Spleen (tissue), 13 donors: ENCODE measurements at regions of chr7 and their contacts with region 1.

Region 1: GRCh38 chr7:140175221-140176121 is 1.3 kb downstream of the KDM7A start:
- DNase-seq: peak; percentile 97
- H3K4me3 ChIP-seq: peak overlapping the region; percentile 48 to 91 (median 70)
- H3K27ac ChIP-seq: peak overlapping the region; percentile 85 to 100 (median 98)
- H3K4me1 ChIP-seq: peaks cover 10 to 62% (median 32%) of the 10 kb centered on the region in 6 donors
- H3K27me3 ChIP-seq: no peaks in the 10 kb centered on the region
- CTCF ChIP-seq: peak; percentile 52 to 90 (median 79)
- POLR2A ChIP-seq: peak; percentile 77 to 96 (median 82)

Region 2: DNA sequence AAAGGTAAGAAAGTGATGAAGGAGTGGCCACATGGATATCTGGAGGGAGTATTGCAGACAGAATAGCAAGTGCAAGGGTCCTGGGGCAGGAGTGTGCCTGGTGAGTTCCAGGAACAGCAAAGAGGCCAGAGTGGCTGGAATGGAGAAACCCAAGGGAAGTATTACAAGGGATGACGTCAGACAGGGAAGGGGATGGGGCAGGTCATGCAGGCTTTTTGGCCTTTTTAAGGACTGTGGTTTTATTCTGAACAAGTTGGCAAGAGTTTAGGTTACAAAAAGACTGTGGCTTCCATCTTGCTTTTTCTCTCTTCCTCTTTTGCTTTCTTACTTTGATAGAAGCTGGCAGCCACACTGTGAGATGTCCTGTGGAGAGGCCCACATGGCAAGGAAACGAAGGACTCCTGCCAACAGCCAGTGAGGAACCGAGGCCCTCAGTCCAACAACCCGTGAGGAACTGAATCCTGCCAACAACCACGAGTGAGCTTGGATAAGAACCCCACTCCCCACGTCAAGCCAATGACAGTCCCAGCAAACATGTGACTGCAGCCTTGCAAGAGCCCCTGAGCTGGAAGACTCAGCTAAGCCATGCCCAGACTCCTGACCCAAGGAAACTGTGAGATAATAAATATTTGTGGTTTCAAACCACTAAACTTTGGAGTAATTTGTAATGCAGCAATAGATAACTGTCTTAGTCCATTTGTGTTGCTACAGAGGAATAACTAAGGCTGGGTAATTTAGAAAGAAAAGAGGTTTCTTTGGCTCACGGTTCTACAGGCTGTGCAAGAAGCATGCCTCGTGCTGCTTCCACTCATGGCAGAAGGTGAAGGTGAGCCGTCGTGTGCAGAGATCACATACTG is 21.1 kb after region 1 on chr7:
- intact Hi-C with region 1: no loop called
- DNase-seq: no peak
- H3K4me3 ChIP-seq: no peak overlapping the region
- H3K27ac ChIP-seq: no peak overlapping the region
- H3K4me1 ChIP-seq: no peaks in the 10 kb centered on the region
- H3K27me3 ChIP-seq: no peaks in the 10 kb centered on the region
- CTCF ChIP-seq: no peak
- POLR2A ChIP-seq: no peak

Region 3: GRCh38 chr7:140230861-140231770 is 55.6 kb after region 1 on chr7:
- intact Hi-C with region 1: loop called (anchors 5 kb)
- DNase-seq: peak; percentile 89
- H3K4me3 ChIP-seq: peak overlapping the region; percentile 42 to 83 (median 57)
- H3K27ac ChIP-seq: peak overlapping the region; percentile 87 to 97 (median 94)
- H3K4me1 ChIP-seq: peaks cover 14 to 65% (median 46%) of the 10 kb centered on the region in 6 donors
- H3K27me3 ChIP-seq: peaks cover 0 to 11% (median 0%) of the 10 kb centered on the region in 7 donors
- CTCF ChIP-seq: no peak
- POLR2A ChIP-seq: no peak

Region 4: GRCh38 chr7:140533394-140533872 is 358.0 kb after region 1 on chr7:
- intact Hi-C with region 1: no loop called
- DNase-seq: no peak
- H3K4me3 ChIP-seq: no peak overlapping the region
- H3K27ac ChIP-seq: peak overlapping the region in 5 of 8 donors; percentile 5 to 74 (median 55)
- H3K4me1 ChIP-seq: peaks cover 0 to 18% (median 1%) of the 10 kb centered on the region in 6 donors
- H3K27me3 ChIP-seq: peaks cover 0 to 6% (median 0%) of the 10 kb centered on the region in 7 donors
- CTCF ChIP-seq: no peak
- POLR2A ChIP-seq: no peak